ENCODE measurements at regions of chr9 and their contacts with region 1.

Region 1: DNA sequence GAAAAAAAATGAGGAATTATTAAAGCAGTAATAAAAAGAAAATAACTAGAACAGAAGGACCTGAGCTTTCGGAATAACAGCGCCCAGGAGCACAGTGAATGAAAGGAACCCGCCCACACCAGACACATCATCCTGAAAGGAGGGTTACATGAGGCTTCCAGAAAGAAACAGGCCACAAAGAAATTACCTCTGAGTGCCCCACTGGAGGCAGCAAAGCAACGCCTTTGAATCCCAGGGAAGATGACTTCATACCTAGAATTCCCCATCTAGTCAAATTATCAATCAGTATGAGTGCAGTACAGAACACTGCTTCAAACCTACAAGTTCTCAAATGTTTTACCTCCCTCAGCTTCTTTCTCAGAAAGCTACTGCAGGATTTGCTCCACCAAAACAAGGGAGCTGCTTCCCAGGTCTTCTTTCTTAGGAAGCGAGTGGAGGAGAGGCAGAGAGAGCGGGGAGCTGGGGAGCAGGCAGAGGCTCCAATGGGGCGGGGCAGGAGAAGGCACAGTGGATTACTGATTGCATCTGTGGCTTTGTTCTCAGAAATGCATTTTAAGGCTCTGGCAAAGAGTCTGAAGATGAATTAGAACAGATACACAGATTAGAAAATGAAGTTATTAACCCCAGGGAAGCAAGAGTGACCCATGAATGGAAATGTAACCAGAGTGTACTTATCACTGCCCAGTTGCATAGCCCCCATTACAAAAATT is 87.1 kb downstream of the SEMA4D start:
- DNase-seq: no peak
- ATAC-seq: no peak
- H3K4me3 ChIP-seq: no peak overlapping the region
- H3K27ac ChIP-seq: peak overlapping the region in 1 of 4 donors; percentile 68
- H3K4me1 ChIP-seq: peaks cover 49 to 67% of the 10 kb centered on the region in 2 donors
- H3K27me3 ChIP-seq: no peaks in the 10 kb centered on the region
- CTCF ChIP-seq: no peak
- POLR2A ChIP-seq: no peak

Region 2: DNA sequence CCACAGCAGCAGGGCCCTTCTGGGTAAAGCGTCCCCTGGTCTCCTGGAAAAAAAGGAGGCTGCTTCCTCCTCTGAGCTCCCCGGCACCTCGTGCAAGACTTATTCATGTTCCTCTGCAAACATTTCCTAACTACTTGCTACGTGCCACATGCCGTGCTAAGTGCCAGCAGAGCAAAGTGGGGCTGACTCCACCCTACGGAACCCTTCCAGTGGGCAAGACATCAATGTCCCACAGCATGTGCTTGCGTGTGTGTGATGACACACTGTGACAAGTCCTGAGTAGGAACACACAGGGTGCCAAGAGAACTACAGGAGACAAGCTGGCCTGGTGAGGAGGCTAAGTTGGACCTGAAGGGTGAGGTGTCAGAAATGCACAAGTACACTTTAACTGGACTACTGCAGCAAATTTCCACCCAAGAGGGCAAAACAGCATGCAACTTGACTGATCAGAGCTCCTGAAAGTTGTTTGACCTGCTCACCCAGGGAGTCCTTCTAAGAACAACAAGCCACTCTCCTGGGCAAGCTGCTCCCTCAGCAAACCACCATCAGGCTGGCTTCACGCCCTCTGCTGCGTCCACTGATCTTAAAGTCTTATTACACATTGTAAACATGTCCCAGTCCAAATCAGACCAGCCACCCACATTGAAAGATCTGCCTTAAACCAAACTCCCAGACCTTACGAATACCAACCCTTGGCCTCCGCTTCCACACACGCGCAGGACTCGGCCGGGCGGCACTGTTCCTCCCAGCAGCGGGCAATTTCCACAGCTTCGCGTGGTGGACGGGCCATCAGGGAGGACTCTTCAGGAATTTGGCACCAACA is 30.0 kb after region 1 on chr9:
- in situ Hi-C with region 1: no loop called
- intact Hi-C with region 1: loop called (anchors 1 kb)
- DNase-seq: peak; percentile 93 to 98
- ATAC-seq: peak; percentile 94 to 95
- H3K4me3 ChIP-seq: no peak overlapping the region
- H3K27ac ChIP-seq: peak overlapping the region; percentile 83 to 88 (median 85)
- H3K4me1 ChIP-seq: peaks cover 42 to 55% of the 10 kb centered on the region in 2 donors
- H3K27me3 ChIP-seq: no peaks in the 10 kb centered on the region
- CTCF ChIP-seq: no peak
- POLR2A ChIP-seq: peak; percentile 58 to 71

Region 3: GRCh38 chr9:89483592-89484522 is 73.1 kb after region 1 on chr9:
- in situ Hi-C with region 1: no loop called
- intact Hi-C with region 1: loop called (anchors 2 kb)
- DNase-seq: peak in 1 of 2 donors; percentile 43
- ATAC-seq: peak; percentile 8 to 11
- H3K4me3 ChIP-seq: peak overlapping the region; percentile 5 to 38 (median 33)
- H3K27ac ChIP-seq: peak overlapping the region; percentile 89 to 95 (median 92)
- H3K4me1 ChIP-seq: peaks cover 65 to 71% of the 10 kb centered on the region in 2 donors
- H3K27me3 ChIP-seq: no peaks in the 10 kb centered on the region
- CTCF ChIP-seq: no peak
- POLR2A ChIP-seq: no peak

Region 4: GRCh38 chr9:89497978-89498851 is 87.4 kb after region 1 on chr9 and contains the start of gene SEMA4D:
- in situ Hi-C with region 1: no loop called
- intact Hi-C with region 1: loop called (anchors 2 kb)
- DNase-seq: peak; percentile 76 to 79
- ATAC-seq: peak; percentile 78 to 84
- H3K4me3 ChIP-seq: peak within 1 kb of the TSS; percentile 66 to 92 (median 78)
- H3K27ac ChIP-seq: peak within 1 kb of the TSS; percentile 85 to 96 (median 90)
- H3K4me1 ChIP-seq: peaks cover 25 to 37% of the 10 kb centered on the region in 2 donors
- H3K27me3 ChIP-seq: no peaks in the 10 kb centered on the region
- CTCF ChIP-seq: no peak
- POLR2A ChIP-seq: peak; percentile 7 to 47
- total RNA-seq, gene SEMA4D: 23.6 to 77.0 (median 41.3) TPM

Measured in gastrocnemius medialis (tissue), 4 donors.